Activated CD4-positive, alpha-beta T cell treated with anti-CD3 and anti-CD28 coated beads for 36 hours (primary cell): ENCODE measurements at regions of chr17 and their contacts with region 1.

Region 1: DNA sequence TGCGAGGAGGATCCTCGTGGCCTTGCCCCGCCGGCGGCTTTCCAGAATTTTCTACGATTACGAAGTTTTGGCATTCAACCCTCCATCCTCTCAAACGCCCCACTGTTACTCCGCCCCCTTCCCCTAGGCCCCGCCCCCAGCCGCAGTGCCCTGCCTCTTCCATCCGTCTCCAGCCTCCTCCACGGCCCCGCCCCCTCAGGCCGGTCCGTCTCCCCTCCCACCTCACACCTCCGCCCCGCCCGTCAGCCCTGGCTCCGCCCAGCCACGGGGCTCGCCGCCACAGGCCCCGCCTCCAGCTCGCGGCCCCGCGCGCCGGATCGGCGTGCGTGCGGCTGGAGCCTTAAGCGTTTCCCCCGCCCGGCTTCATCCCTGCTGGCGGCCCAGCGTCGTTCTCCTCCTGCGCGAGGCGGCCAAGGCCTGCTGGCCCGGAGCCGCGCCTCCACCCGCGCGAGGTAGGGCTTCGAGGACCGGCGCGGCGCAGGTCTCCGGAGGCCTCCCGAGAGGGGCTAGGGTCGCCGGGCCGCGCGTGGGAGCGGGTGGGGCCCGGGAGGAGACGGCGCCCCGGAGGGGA is at the starts of genes C17orf67 and DGKE:
- DNase-seq: peak; percentile 100
- ATAC-seq: peak; percentile 93
- H3K4me3 Mint-ChIP-seq: peak within 1 kb of the TSS; percentile 86
- H3K27ac Mint-ChIP-seq: peak within 1 kb of the TSS; percentile 90
- H3K4me1 Mint-ChIP-seq: peaks cover 62% of the 10 kb centered on the region
- H3K27me3 Mint-ChIP-seq: no peaks in the 10 kb centered on the region
- total RNA-seq, gene C17orf67: 4.0 to 5.0 TPM
- total RNA-seq, gene DGKE: 22.4 to 27.4 TPM

Region 2: DNA sequence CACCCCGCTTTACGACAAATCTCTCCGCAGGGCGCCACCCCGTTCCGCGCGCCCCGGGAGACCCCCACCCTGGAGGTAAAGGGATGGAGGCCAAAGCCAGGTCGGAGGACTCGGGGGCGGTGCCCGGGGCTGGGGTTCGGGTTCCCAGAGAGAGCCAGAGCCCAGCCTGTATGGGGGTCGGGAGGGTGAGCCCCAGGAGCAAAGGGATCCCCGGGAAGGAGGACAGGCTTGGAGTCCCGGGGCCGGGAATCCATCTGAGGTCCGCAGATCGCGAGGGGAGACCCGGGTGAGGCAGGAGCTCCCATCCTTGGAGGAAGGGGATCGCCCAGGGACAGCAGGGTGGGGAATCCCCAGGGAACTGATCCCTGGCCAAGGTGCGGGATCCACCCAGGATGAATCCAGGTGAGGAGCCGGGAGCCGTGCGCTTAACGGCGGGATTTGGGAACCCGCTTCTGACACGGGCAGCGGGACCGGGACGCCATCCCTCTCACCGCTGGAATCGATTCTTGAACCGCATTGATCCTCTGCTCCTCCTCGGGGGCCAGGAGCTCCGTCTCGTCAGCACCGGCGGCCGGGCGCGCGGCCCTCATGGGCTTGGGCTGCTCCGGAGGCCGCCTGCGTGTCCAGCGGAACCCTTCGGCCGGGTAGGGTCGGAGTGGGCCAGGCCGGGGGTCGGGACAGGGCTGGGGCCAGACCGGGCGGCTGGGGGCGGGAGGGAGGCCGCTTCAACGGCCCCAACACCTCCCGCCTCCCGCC is 1412.5 kb before region 1 on chr17 and contains the start of gene MMD:
- CTCF ChIA-PET with region 1: no interaction called
- POLR2A ChIA-PET with region 1: no interaction called
- intact Hi-C with region 1: loop called in 1 of 2 experiments (anchors 5 kb)
- DNase-seq: no peak
- ATAC-seq: peak; percentile 22
- H3K4me3 Mint-ChIP-seq: peak within 1 kb of the TSS; percentile 86
- H3K27ac Mint-ChIP-seq: peak within 1 kb of the TSS; percentile 89
- H3K4me1 Mint-ChIP-seq: peaks cover 44% of the 10 kb centered on the region
- H3K27me3 Mint-ChIP-seq: peaks cover 22% of the 10 kb centered on the region
- total RNA-seq, gene MMD: 17.4 to 19.6 TPM

Region 3: DNA sequence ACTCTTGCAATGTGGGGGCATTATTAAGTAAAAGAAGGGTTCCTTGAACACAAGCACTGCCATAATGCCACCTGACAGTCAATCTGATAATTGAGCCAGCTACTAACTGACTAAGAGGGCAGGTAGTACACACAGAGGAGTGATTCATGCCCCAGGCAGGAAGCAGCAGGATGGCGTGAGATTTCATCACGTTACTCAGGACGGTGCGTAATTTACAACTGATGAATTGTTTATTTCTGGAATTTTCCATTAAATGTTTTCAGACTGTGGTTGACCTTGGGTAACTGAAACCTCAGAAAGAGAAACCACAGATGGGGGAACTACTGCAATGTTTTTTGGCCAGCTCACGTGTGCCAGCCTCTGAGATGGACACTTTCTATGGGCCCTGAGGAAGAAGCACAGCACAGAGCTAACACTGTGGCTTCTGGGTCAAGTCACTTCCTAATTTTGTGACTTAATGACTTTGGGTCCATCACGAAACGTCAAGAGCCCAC is 46.9 kb before region 1 on chr17:
- CTCF ChIA-PET with region 1: no interaction called
- POLR2A ChIA-PET with region 1: no interaction called
- intact Hi-C with region 1: loop called (anchors 1 to 2 kb)
- DNase-seq: peak; percentile 82
- ATAC-seq: peak; percentile 98
- H3K4me3 Mint-ChIP-seq: peak overlapping the region; percentile 37
- H3K27ac Mint-ChIP-seq: peak overlapping the region; percentile 97
- H3K4me1 Mint-ChIP-seq: peaks cover 34% of the 10 kb centered on the region
- H3K27me3 Mint-ChIP-seq: peaks cover 1% of the 10 kb centered on the region

Region 4: DNA sequence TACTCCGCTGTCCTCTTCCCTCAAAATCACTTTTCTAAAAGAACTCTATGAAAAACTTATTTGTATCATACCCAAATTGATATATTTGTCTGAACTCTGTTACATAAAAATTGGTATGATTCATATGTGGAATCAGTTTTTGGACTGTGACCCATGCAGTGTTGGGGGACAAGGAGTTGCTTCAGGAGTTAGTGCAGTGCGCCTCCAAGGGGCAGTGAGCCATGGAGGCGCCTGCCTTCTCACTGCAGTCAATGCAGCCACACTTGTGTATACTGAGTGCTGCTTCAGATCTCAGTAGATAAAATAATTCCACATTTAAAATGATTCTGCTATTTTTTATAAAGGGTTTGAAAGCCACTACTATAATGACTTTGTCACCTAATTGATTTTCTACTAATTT is 32.6 kb after region 1 on chr17:
- CTCF ChIA-PET with region 1: interaction called, 6 read pairs
- POLR2A ChIA-PET with region 1: no interaction called
- intact Hi-C with region 1: loop called in 1 of 2 experiments (anchors 1 kb)
- DNase-seq: no peak
- ATAC-seq: no peak
- H3K4me3 Mint-ChIP-seq: no peak overlapping the region
- H3K27ac Mint-ChIP-seq: no peak overlapping the region
- H3K4me1 Mint-ChIP-seq: peaks cover 16% of the 10 kb centered on the region
- H3K27me3 Mint-ChIP-seq: no peaks in the 10 kb centered on the region

Region 5: DNA sequence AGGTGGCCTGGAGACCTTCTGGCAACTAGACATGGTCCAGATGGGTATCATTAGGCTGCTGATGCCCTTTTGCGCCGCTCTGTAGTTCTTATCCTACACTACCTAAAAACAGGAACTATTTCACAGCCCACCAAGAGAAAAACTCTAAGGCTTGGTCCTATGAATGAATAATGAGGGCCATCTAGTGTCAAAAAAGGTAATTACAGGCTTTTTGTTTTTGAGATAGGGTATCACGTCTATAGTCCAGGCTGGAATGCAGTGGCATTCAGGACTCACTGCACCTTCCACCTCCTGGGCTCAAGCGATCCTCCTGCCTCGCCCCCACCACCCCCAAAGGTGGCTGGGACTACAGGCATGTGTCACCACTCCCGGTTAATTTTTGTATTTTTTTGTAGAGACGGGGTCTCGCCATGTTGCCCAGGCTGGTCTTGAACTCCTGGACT is 106.0 kb after region 1 on chr17:
- CTCF ChIA-PET with region 1: interaction called, 7 read pairs
- POLR2A ChIA-PET with region 1: interaction called, 3 read pairs
- intact Hi-C with region 1: loop called in 1 of 2 experiments (anchors 1 kb)
- DNase-seq: no peak
- ATAC-seq: peak; percentile 64
- H3K4me3 Mint-ChIP-seq: no peak overlapping the region
- H3K27ac Mint-ChIP-seq: no peak overlapping the region
- H3K4me1 Mint-ChIP-seq: peaks cover 22% of the 10 kb centered on the region
- H3K27me3 Mint-ChIP-seq: no peaks in the 10 kb centered on the region

Region 6: DNA sequence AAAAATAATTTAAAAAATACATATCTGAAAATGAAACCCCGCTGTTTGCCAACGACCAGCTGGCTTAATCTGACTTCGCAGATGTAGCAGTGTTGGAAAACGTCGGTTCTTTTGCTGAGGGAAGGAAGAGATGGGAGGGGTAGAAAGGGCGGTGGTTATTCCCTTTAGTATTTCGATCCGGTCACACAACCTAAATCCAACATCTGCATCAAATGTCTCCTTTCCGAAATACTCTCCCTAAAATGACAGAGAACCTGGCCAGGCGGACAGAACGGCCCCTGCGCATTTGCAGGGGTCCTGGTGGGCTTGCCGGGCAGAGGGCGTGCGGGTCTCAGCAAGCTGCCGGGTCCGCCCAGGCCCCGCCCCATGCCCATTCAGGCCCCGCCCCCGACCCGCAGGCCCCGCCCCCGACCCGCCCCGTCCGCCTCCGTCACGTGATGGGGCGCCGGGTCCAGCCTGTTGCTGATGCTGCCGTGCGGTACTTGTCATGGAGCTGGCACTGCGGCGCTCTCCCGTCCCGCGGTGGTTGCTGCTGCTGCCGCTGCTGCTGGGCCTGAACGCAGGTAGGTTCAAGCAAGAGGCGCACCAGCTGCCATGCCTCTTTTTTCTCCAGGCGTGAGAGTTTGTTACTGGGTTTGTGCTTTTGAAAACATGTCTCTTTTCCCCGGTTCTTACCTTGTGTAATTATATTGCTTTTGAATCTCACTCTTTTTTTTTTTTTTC is 143.9 kb after region 1 on chr17 and contains the start of gene SCPEP1:
- CTCF ChIA-PET with region 1: interaction called, 5 read pairs
- POLR2A ChIA-PET with region 1: no interaction called
- intact Hi-C with region 1: loop called in 1 of 2 experiments (anchors 1 kb)
- DNase-seq: peak; percentile 90
- ATAC-seq: peak; percentile 96
- H3K4me3 Mint-ChIP-seq: peak within 1 kb of the TSS; percentile 83
- H3K27ac Mint-ChIP-seq: peak within 1 kb of the TSS; percentile 74
- H3K4me1 Mint-ChIP-seq: peaks cover 18% of the 10 kb centered on the region
- H3K27me3 Mint-ChIP-seq: peaks cover 3% of the 10 kb centered on the region
- total RNA-seq, gene SCPEP1: 9.7 to 14.8 TPM